BJ (cell line): ENCODE measurements at regions of chr6 and their contacts with region 1.

Region 1: GRCh38 chr6:114000066-114000465 is 29.1 kb upstream of the HDAC2 start:
- DNase-seq: no peak
- H3K4me3 ChIP-seq: no peak overlapping the region
- H3K27me3 ChIP-seq: no peaks in the 10 kb centered on the region
- CTCF ChIP-seq: no peak

Region 2: GRCh38 chr6:112881027-112881426 is 1119.0 kb before region 1 on chr6:
- CTCF ChIA-PET with region 1: no interaction called
- POLR2A ChIA-PET with region 1: no interaction called
- DNase-seq: no peak
- H3K4me3 ChIP-seq: no peak overlapping the region
- H3K27me3 ChIP-seq: no peaks in the 10 kb centered on the region
- CTCF ChIP-seq: no peak

Region 3: DNA sequence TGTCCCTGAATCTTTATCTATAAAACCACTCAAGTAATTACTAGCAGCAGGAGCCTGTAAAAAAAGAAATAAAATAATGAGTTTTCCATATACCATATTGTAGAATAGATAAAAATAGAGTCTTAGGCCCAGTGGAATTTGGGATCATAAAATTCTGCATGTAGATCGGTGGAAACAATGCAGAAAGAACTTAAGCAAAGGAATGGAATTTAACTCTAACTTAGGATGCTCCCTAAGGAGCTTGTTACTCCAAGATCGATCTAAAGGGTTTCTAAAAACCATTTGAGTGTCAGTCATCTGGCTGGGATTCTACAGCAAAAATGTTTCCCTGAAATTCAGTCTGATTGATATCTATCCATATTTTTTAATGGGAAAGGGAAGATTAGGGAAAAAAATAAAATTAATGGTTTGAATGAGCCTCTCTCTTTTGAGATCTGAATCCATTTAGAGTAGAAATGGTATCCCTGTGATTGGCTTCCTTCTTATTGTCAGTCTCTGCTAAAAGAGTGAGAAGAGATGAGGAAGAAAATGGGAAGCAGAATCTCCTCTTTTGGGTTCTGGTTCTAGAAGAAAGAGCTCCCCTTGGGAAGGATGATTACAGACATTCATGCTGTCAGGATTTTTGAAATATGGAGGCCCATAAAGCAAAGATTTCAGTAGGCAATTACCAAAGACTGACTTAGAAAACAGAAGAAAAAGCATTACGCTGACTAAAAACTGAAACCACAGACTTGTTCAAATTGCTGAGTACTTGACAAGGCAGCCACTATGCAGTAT is 707.2 kb before region 1 on chr6:
- CTCF ChIA-PET with region 1: no interaction called
- POLR2A ChIA-PET with region 1: interaction called, 13 read pairs
- DNase-seq: no peak
- H3K4me3 ChIP-seq: no peak overlapping the region
- H3K27me3 ChIP-seq: no peaks in the 10 kb centered on the region
- CTCF ChIP-seq: no peak

Region 4: DNA sequence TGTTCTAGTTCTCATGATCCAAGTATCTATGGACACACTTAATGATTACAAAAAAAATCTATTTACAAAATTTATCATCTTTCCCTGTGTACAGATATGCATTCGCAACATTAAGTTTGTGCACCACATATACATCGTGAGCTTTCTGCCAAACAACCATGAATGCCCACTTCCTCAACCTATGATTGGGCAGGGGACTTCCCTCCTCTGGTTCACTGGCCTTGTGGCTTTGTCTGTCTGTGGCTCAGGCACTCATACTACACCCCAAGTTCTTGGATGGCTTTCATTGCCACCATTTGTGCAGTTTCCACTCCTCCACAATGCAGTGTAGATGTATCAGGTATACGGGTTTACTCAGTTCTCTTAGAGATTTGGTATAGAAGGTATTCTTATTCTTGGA is 267.8 kb after region 1 on chr6:
- CTCF ChIA-PET with region 1: no interaction called
- POLR2A ChIA-PET with region 1: no interaction called
- DNase-seq: no peak
- H3K4me3 ChIP-seq: no peak overlapping the region
- H3K27me3 ChIP-seq: no peaks in the 10 kb centered on the region
- CTCF ChIP-seq: no peak

Region 5: GRCh38 chr6:114785235-114786127 is 785.4 kb after region 1 on chr6:
- CTCF ChIA-PET with region 1: no interaction called
- POLR2A ChIA-PET with region 1: no interaction called
- DNase-seq: no peak
- H3K4me3 ChIP-seq: no peak overlapping the region
- H3K27me3 ChIP-seq: no peaks in the 10 kb centered on the region
- CTCF ChIP-seq: no peak